Activated naive CD4-positive, alpha-beta T cell treated with anti-CD3 and anti-CD28 coated beads for 36 hours (primary cell): ENCODE measurements at regions of chr19 and their contacts with region 1.

Region 1: DNA sequence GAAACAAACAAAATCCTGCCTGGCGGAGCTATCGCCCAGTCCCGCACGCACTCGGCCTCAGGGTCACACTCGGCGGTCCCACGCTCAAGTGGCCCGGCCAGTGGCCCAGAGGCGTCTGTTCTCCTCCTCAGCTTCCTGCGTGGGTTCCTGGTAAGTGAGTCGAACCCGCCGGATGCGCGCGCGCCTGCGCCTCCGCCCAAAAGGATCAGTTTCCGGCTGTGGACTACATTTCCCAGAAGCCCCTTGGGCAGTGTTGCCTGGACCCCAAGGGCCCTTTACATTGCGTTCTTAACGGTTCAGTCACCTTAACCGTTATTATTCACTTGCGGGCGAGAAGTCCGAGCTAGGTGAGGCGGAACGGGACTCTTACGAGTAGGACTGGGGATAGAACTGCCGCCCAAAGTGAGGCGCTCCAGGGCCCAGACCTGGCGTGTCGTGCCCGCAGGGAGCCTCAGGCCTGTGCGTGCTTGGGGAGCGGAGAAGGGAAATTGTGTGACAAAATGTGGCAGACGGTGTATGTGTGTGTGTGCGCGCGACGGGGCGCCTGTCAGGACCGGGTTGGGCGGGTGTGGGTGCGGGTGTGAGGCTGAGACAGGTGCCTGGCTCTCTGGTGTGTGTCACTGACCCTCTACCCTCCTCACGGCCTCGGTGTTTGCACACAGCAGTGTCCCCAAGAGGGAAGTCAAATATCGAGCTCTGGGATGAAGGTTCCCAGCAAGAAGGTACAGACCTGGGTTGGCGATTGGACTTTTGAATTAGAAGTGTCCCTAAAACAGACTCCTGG is at the start of gene ZNF546:
- DNase-seq: peak; percentile 94
- H3K4me3 Mint-ChIP-seq: peak within 1 kb of the TSS; percentile 93
- H3K27ac Mint-ChIP-seq: peak within 1 kb of the TSS; percentile 94
- H3K4me1 Mint-ChIP-seq: peaks cover 41% of the 10 kb centered on the region
- H3K27me3 Mint-ChIP-seq: no peaks in the 10 kb centered on the region
- total RNA-seq, gene ZNF546: 1.6 to 2.3 TPM

Region 2: GRCh38 chr19:39445265-39446111 is 551.5 kb before region 1 on chr19 and contains the start of gene SUPT5H:
- CTCF ChIA-PET with region 1: no interaction called
- intact Hi-C with region 1: loop called (anchors 10 kb)
- DNase-seq: peak; percentile 99
- H3K4me3 Mint-ChIP-seq: peak within 1 kb of the TSS; percentile 99
- H3K27ac Mint-ChIP-seq: peak within 1 kb of the TSS; percentile 96
- H3K4me1 Mint-ChIP-seq: peaks cover 49% of the 10 kb centered on the region
- H3K27me3 Mint-ChIP-seq: no peaks in the 10 kb centered on the region
- total RNA-seq, gene SUPT5H: 129 to 139 TPM

Region 3: GRCh38 chr19:39941615-39942365 is 55.2 kb before region 1 on chr19:
- CTCF ChIA-PET with region 1: no interaction called
- intact Hi-C with region 1: loop called (anchors 2 kb)
- DNase-seq: peak; percentile 75
- H3K4me3 Mint-ChIP-seq: peak overlapping the region; percentile 46
- H3K27ac Mint-ChIP-seq: peak overlapping the region; percentile 74
- H3K4me1 Mint-ChIP-seq: peaks cover 74% of the 10 kb centered on the region
- H3K27me3 Mint-ChIP-seq: no peaks in the 10 kb centered on the region

Region 4: GRCh38 chr19:40055832-40056504 is 59.0 kb after region 1 on chr19 and contains the start of gene ZNF780B:
- CTCF ChIA-PET with region 1: interaction called, 4 read pairs
- intact Hi-C with region 1: loop called (anchors 1 kb)
- DNase-seq: peak; percentile 84
- H3K4me3 Mint-ChIP-seq: peak within 1 kb of the TSS; percentile 99
- H3K27ac Mint-ChIP-seq: peak within 1 kb of the TSS; percentile 93
- H3K4me1 Mint-ChIP-seq: peaks cover 36% of the 10 kb centered on the region
- H3K27me3 Mint-ChIP-seq: no peaks in the 10 kb centered on the region
- total RNA-seq, gene ZNF780B: 8.3 to 9.8 TPM

Region 5: DNA sequence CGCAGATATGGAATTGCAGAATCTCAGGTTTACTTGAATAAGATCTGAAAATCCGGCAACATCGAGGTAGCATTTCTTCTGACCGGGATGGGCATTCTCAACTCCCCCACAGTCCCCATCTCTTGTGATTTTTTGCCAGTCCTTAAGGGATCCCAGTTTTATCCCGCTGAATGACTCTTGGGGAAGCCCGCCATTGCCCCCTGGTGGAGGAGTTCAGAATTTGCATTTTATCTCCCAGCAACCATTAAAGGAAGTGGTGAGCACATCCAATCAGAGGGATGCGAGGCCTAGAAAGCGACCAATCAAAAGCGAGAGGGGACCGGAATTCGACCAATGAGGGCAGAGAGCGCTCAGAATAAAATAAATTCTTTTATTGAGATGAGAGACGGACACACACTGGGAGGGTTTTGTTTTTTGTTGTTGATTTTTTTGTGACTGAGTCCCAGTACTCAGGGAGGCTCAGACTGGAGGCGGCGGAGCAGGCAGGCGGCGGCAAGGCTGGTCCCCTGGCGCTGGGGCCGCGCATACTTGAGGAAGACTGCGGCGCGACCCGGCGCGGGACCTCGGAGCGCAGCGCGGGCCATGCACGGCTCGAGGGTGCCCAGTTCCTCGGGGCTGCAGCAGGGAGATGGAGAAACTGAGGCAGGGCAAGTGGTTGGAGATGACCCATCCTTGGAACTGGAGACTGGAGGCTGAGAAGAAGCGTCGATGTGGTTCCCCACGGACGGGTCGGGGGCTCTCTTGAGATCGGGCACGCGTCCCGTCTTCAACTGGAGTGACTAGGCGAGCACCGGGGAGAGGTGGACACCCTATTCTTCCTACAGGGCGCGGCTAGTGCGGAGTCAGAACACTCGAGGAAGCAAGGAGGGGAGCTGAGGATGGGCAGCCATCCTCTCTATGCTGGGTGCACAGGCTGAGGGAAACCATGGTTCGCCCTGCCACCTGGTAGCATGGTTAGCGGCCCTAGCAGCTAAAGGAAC is 225.1 kb after region 1 on chr19:
- CTCF ChIA-PET with region 1: no interaction called
- intact Hi-C with region 1: loop called (anchors 5 kb)
- DNase-seq: peak; percentile 86
- H3K4me3 Mint-ChIP-seq: no peak overlapping the region
- H3K27ac Mint-ChIP-seq: no peak overlapping the region
- H3K4me1 Mint-ChIP-seq: peaks cover 22% of the 10 kb centered on the region
- H3K27me3 Mint-ChIP-seq: peaks cover 67% of the 10 kb centered on the region

Region 6: GRCh38 chr19:40348125-40348913 is 351.3 kb after region 1 on chr19 and contains the starts of genes C19orf47 and PLD3:
- CTCF ChIA-PET with region 1: no interaction called
- intact Hi-C with region 1: loop called (anchors 2 kb)
- DNase-seq: peak; percentile 99
- H3K4me3 Mint-ChIP-seq: peak within 1 kb of the TSS; percentile 89
- H3K27ac Mint-ChIP-seq: peak within 1 kb of the TSS; percentile 78
- H3K4me1 Mint-ChIP-seq: peaks cover 29% of the 10 kb centered on the region
- H3K27me3 Mint-ChIP-seq: no peaks in the 10 kb centered on the region
- total RNA-seq, gene C19orf47: 13.5 to 14.6 TPM
- total RNA-seq, gene PLD3: 57.6 to 58.2 TPM

Region 7: DNA sequence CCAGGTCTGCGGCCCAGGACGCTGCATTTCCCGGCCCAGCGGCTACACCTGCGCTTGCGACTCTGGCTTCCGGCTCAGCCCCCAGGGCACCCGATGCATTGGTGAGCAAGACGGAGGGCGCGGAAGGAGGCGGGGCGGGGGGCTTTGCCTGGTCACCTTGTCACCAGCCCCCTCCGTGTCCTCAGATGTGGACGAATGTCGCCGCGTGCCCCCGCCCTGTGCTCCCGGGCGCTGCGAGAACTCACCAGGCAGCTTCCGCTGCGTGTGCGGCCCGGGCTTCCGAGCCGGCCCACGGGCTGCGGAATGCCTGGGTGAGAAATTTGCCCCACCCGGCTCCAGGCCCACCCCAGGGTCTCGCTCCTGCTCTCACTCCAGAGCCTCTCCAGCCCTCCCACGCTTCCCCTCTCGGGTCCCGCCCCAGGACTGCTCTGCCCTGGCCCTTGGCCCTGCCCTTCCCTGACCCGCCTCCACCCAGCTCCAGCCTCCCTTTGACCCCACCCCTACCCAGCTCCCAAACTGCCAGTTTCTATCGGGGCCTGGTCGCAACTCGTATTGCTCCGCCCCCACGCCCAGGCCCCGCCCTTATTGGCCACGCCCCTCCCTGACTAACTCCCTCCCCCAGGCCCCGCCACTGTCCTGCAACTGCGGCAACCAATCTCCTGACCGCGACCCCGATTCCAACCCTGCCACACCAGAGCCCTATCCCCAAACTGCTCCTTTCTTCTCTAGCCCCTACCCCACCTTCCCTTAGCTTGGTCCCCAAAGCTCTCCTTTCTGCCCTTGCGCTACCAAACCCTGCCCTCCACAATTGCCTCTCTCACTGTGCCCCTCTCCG is 612.8 kb after region 1 on chr19:
- CTCF ChIA-PET with region 1: no interaction called
- intact Hi-C with region 1: loop called (anchors 10 kb)
- DNase-seq: peak; percentile 97
- H3K4me3 Mint-ChIP-seq: peak overlapping the region; percentile 89
- H3K27ac Mint-ChIP-seq: peak overlapping the region; percentile 91
- H3K4me1 Mint-ChIP-seq: peaks cover 67% of the 10 kb centered on the region
- H3K27me3 Mint-ChIP-seq: no peaks in the 10 kb centered on the region